ENCODE measurements at regions of chr3 and their contacts with region 1.

Region 1: GRCh38 chr3:191721990-191722389 is 261.0 kb downstream of the PYDC2 start:
- DNase-seq: no peak
- ATAC-seq: no peak
- H3K4me3 ChIP-seq: no peak overlapping the region
- H3K4me3 Mint-ChIP-seq: no peak overlapping the region
- H3K27ac ChIP-seq: no peak overlapping the region
- H3K27ac Mint-ChIP-seq: no peak overlapping the region
- H3K4me1 ChIP-seq: no peaks in the 10 kb centered on the region
- H3K4me1 Mint-ChIP-seq: no peaks in the 10 kb centered on the region
- H3K27me3 ChIP-seq: no peaks in the 10 kb centered on the region
- H3K27me3 Mint-ChIP-seq: no peaks in the 10 kb centered on the region
- CTCF ChIP-seq: no peak

Region 2: DNA sequence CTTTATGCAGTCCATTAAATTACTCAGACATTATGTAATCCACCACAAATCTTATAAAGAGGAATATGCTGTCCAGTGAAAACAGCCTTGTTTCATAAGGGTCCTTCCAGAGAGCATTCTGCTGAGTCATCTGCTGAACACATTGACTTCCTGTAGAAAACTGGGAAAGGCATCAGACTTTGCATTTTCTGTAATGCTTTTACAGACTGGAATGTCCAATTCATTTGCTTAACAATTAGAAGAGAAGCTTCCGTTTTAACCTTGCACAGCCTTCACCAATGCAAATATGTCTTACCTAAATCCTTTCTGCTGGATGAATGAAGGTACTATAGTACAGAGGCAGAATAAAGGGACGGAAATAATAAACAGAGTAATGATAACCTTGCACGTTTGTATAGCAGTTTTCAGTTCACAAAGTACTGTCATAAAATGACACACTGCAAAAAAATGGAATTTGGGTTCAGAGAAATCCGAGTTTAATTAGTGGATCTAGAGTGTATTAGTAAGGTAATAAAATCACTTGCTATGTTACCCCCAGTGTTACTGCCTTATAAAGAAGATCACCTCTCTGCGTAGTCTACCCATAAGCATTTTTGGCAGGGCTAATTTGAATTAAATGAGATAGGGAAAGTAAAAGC is 40.5 kb after region 1 on chr3:
- CTCF ChIA-PET with region 1: no interaction called
- POLR2A ChIA-PET with region 1: no interaction called
- intact Hi-C with region 1: loop called in 1 of 2 experiments (anchors 1 kb)
- DNase-seq: no peak
- ATAC-seq: no peak
- H3K4me3 ChIP-seq: no peak overlapping the region
- H3K4me3 Mint-ChIP-seq: no peak overlapping the region
- H3K27ac ChIP-seq: no peak overlapping the region
- H3K27ac Mint-ChIP-seq: no peak overlapping the region
- H3K4me1 ChIP-seq: no peaks in the 10 kb centered on the region
- H3K4me1 Mint-ChIP-seq: no peaks in the 10 kb centered on the region
- H3K27me3 ChIP-seq: no peaks in the 10 kb centered on the region
- H3K27me3 Mint-ChIP-seq: no peaks in the 10 kb centered on the region
- CTCF ChIP-seq: no peak

Region 3: DNA sequence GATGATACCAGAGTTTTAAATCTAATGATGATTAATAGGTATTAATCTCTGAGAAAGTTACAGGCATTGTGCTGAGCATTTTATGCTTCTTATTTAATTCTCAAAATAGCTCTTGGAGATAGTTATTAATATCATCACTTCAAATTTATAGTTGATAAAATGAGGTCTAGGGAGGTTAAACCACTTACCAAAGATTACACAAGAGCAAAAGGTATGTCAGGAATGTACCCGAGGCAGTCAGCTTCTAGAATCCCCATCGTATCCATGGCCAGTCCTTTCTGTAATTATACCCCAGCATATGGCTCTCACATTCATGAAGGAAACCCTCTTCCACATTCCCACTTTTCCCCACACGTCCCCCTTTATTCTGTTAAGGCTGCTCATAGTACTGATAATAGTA is 160.3 kb after region 1 on chr3:
- CTCF ChIA-PET with region 1: no interaction called
- POLR2A ChIA-PET with region 1: no interaction called
- intact Hi-C with region 1: no loop called
- DNase-seq: no peak
- ATAC-seq: no peak
- H3K4me3 ChIP-seq: no peak overlapping the region
- H3K4me3 Mint-ChIP-seq: no peak overlapping the region
- H3K27ac ChIP-seq: no peak overlapping the region
- H3K27ac Mint-ChIP-seq: no peak overlapping the region
- H3K4me1 ChIP-seq: no peaks in the 10 kb centered on the region
- H3K4me1 Mint-ChIP-seq: no peaks in the 10 kb centered on the region
- H3K27me3 ChIP-seq: no peaks in the 10 kb centered on the region
- H3K27me3 Mint-ChIP-seq: no peaks in the 10 kb centered on the region
- CTCF ChIP-seq: no peak

Measured in CD8-positive, alpha-beta T cell (primary cell).